ENCODE measurements at regions of chr10 and their contacts with region 1.

Region 1: DNA sequence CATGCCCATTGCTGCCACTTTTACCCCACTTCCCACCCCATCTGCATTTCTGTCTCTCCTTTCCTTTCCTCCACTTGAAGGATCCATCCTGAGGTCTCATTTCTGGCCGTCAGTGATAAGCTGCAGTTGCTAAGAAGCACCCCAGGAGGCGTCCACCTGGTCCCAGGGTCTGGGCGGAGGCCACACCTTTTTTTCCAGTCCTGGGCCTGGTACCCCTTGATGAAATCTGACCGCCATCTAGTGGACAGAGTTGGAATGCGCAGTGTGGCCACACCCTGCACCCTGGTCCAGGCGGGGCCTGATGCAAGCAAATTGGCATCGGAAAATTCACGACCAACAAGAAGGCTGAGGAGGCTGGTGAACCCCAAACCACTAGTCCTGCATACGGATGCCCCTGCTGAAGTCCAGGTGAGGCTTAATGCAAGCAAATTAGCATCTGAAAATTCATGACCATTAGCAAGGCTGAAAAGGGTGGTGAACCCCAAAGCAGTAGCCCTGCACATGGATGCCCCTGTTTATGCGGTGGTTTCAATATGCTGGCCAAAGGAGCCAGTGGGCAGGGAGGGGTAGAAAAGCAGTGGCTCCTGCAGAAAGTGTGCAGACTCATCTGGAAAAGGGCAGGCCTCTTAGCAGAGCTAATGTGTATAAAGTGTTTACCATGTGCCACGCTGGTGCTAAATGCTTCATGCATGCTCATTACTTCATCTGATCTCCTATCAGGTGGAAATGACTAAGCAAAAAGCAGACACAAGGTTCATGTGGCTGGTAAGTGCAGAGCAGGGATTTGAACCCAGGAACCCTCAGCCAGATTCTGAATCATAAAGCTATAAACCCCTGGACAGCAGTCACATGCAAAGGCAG is 43.2 kb downstream of the GPAM start:
- H3K4me3 ChIP-seq: no peak overlapping the region
- H3K27ac ChIP-seq: no peak overlapping the region
- H3K4me1 ChIP-seq: no peaks in the 10 kb centered on the region
- CTCF ChIP-seq: peak; percentile 84

Region 2: DNA sequence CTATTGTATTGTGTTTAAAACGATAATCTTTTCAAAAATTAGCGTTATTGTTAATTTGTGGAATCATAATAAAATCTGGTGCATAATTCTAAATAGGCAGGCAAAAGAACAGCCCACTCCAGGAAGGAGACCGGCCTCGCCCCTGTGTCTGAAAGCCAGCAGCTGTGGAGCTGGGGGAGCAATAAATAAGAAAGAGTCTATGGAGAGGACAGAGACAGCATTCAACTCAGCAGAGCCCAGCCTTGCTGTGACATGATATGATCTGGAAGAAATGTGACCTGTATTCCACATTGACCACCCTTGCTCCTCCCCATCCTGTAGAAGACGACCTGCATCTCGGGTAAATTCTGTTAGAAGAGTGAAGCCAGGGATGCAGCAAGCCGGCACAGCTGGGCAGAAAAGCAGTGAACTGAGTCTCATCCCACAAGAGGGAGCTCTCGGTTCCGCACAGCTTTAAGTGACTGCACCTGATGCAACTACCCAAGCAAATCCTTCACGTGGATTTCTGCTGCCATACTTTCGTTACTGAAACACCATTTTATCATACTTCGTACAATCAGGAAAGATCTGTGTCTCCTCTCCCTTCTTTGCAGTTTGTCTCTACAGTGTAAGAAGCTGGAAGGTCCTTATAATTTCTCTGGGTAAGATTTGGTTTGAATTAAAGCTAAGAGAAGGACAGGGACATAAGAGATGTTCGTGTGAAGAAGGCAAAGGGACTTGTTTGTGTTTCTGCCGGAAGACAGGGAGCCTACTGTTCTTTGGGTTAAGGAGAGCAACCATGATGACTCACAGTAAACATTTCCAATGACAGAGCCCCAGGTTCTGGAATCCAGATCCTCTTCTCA is 383.9 kb before region 1 on chr10:
- CTCF ChIA-PET with region 1: interaction called, 38 read pairs
- POLR2A ChIA-PET with region 1: no interaction called
- H3K4me3 ChIP-seq: no peak overlapping the region
- H3K27ac ChIP-seq: no peak overlapping the region
- H3K4me1 ChIP-seq: no peaks in the 10 kb centered on the region
- CTCF ChIP-seq: no peak

Region 3: DNA sequence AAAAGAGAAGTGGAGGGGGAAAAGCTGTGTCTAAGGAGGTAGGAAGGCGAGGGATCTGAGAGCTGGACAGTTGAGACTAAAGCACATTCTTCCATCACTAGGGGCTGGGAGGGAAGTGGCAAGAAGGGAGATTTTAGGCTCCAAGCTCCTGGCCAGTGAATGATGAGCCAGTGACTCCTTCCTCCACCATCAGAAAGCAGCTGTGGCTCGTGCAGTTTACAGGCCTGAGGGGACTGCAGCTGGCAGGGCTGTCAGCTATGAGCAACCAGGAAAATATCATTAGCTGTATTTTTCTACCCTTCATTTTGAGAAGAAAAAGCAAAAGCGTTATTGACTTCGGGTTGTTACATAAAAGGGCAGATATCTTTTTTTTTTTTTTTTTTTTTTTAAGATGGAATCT is 17.5 kb before region 1 on chr10:
- CTCF ChIA-PET with region 1: interaction called, 25 read pairs
- POLR2A ChIA-PET with region 1: no interaction called
- H3K4me3 ChIP-seq: no peak overlapping the region
- H3K27ac ChIP-seq: no peak overlapping the region
- H3K4me1 ChIP-seq: no peaks in the 10 kb centered on the region
- CTCF ChIP-seq: no peak

Region 4: GRCh38 chr10:112307358-112308124 is 167.2 kb after region 1 on chr10:
- CTCF ChIA-PET with region 1: interaction called, 12 read pairs
- POLR2A ChIA-PET with region 1: no interaction called
- H3K4me3 ChIP-seq: no peak overlapping the region
- H3K27ac ChIP-seq: no peak overlapping the region
- H3K4me1 ChIP-seq: no peaks in the 10 kb centered on the region
- CTCF ChIP-seq: peak; percentile 56

Region 5: DNA sequence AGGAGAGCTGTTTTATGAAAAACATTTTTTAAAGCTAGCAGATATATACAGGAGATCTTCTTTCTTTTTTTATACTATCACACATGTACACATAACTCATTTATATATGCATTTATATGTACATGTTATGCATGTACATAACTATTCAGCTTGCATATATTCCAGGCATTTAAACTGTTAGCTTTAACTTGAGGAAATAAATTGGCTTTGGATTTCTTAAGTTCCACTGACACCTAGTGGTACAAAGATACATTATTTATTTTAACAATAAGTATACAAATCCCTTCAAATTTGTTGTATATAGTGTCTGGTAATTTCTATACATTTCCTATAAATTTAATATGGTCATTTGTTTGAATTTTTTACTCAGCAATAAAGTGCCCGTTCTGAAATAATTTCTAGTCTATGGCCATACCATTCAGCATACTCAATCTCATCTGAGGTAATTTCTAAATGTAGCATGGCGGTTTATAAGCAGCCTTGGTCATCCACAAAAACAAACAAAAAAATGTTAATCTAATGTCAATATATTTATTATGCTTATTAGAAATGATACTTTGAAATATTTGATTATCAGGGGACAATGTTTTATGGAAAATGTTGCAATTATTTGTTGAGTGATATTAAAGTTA is 294.8 kb after region 1 on chr10:
- CTCF ChIA-PET with region 1: interaction called, 13 read pairs
- POLR2A ChIA-PET with region 1: no interaction called
- H3K4me3 ChIP-seq: no peak overlapping the region
- H3K27ac ChIP-seq: no peak overlapping the region
- H3K4me1 ChIP-seq: no peaks in the 10 kb centered on the region
- CTCF ChIP-seq: no peak

Measured in HEK293 (cell line).